BJ (cell line): ENCODE measurements at regions of chr22 and their contacts with region 1.

Region 1: GRCh38 chr22:40739721-40740120 is 60.4 kb downstream of the MCHR1 start:
- DNase-seq: no peak
- H3K4me3 ChIP-seq: no peak overlapping the region
- H3K27me3 ChIP-seq: peaks cover 3% of the 10 kb centered on the region; the same call in 1 of the 2 replicates
- CTCF ChIP-seq: no peak

Region 2: DNA sequence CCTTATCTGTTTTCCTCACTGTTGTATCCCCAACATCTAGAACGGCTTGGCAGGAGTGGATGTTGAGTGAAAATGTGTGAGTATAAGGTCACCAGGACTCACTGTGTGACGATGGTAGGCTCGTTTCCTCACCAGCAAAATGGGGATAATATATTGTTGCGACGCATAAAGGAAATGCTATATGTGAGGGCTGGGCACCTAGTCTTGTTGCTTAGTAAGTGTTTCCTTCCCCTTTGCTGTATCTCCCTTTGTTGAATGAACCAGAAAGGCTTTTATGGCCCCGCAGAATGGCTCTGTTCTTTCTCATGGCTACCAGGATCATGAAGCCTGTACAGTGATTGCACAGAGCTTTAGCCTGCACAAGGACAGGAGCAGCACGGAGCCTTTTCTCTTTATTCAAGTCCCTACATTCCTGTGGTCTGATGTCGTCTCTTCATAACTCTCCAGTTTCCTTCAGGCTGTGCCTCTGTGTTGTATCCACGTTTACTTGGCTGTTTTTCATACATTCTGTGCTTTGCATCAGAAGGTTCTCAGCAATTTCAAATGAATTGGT is 556.6 kb before region 1 on chr22:
- CTCF ChIA-PET with region 1: no interaction called
- POLR2A ChIA-PET with region 1: interaction called, 13 read pairs
- DNase-seq: peak; percentile 84
- H3K4me3 ChIP-seq: no peak overlapping the region
- H3K27me3 ChIP-seq: no peaks in the 10 kb centered on the region
- CTCF ChIP-seq: no peak

Region 3: GRCh38 chr22:40728731-40729189 is 11.0 kb before region 1 on chr22:
- CTCF ChIA-PET with region 1: no interaction called
- POLR2A ChIA-PET with region 1: no interaction called
- DNase-seq: no peak
- H3K4me3 ChIP-seq: no peak overlapping the region
- H3K27me3 ChIP-seq: no peaks in the 10 kb centered on the region
- CTCF ChIP-seq: no peak

Region 4: DNA sequence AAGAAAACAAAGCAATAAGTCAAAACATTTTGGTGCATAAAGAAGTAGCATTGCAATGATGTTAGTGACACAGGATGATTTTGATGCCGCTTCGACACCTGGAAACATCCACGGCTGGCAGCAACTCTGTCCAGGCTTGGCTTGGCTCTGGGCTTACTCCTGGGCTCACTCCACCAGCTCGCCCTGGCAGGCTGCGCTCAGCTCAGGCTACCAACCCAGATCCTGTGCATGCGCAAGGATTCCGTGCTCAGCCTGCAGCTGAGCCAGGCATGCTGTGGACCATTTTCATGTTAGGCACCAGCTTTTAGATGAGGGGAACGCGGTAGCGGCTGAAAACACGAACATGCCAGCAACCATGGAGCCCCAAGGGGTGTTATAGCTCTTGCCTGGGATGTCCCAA is 13.4 kb after region 1 on chr22:
- CTCF ChIA-PET with region 1: no interaction called
- POLR2A ChIA-PET with region 1: no interaction called
- DNase-seq: no peak
- H3K4me3 ChIP-seq: no peak overlapping the region
- H3K27me3 ChIP-seq: no peaks in the 10 kb centered on the region
- CTCF ChIP-seq: no peak